ENCODE measurements at regions of chr10 and their contacts with region 1.

Region 1: GRCh38 chr10:29618341-29619171 is 16.2 kb downstream of the SVIL start:
- DNase-seq: peak; percentile 90
- ATAC-seq: peak; percentile 95
- H3K4me3 ChIP-seq: peak overlapping the region; percentile 52 to 67 (median 67)
- H3K27ac ChIP-seq: peak overlapping the region; percentile 88
- H3K4me1 ChIP-seq: peaks cover 56% of the 10 kb centered on the region
- H3K27me3 ChIP-seq: no peaks in the 10 kb centered on the region
- CTCF ChIP-seq: no peak
- EP300 ChIP-seq: peak in 1 of 2 experiments; percentile 63; a peak in 1 of 4 replicates
- POLR2A ChIP-seq: peak in 1 of 2 experiments; percentile 56; a peak in 1 of 4 replicates
- RAD21 ChIP-seq: no peak

Region 2: DNA sequence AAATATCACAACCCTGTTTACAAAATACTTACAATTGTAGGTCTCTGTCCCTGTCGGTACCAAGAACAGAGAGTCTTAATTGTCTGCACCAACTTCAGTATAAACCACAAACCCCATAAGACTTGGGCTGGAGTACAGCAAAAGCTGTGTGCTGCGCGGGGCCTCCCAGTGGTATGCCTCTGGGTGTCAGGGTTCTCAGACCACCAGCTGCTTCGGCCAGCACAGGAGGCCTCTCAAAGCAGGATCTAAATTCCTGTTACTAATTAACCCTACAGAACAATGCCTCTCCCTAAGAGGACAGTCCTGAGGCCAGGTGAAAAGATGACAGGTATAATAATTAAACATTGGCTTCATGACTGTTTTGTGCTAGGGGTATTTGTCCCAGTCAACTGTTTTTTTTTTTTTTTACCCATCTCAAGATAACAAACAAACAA is 17.2 kb after region 1 on chr10:
- CTCF ChIA-PET with region 1: no interaction called
- POLR2A ChIA-PET with region 1: interaction called, 8 read pairs
- in situ Hi-C with region 1: no loop called
- intact Hi-C with region 1: loop called (anchors 1 kb)
- DNase-seq: peak; percentile 87
- ATAC-seq: peak; percentile 100
- H3K4me3 ChIP-seq: peak overlapping the region; percentile 36 to 55 (median 37); a peak in 4 of 6 replicates
- H3K27ac ChIP-seq: peak overlapping the region; percentile 37
- H3K4me1 ChIP-seq: peaks cover 42% of the 10 kb centered on the region
- H3K27me3 ChIP-seq: no peaks in the 10 kb centered on the region
- CTCF ChIP-seq: peak; percentile 48
- EP300 ChIP-seq: peak in 1 of 2 experiments; percentile 58; a peak in 2 of 4 replicates
- POLR2A ChIP-seq: peak in 1 of 2 experiments; percentile 31; a peak in 1 of 4 replicates
- RAD21 ChIP-seq: 0 out of 2 replicates have a peak, but pooled peaks have one; percentile 15

Region 3: GRCh38 chr10:29648114-29648982 is 29.8 kb after region 1 on chr10:
- CTCF ChIA-PET with region 1: no interaction called
- POLR2A ChIA-PET with region 1: interaction called, 10 read pairs
- in situ Hi-C with region 1: no loop called
- intact Hi-C with region 1: no loop called
- DNase-seq: no peak
- ATAC-seq: no peak; the same call in 2 of the 3 replicates
- H3K4me3 ChIP-seq: no peak overlapping the region
- H3K27ac ChIP-seq: peak overlapping the region; percentile 28
- H3K4me1 ChIP-seq: peaks cover 30% of the 10 kb centered on the region
- H3K27me3 ChIP-seq: no peaks in the 10 kb centered on the region
- CTCF ChIP-seq: no peak
- EP300 ChIP-seq: no peak
- POLR2A ChIP-seq: no peak
- RAD21 ChIP-seq: no peak

Region 4: DNA sequence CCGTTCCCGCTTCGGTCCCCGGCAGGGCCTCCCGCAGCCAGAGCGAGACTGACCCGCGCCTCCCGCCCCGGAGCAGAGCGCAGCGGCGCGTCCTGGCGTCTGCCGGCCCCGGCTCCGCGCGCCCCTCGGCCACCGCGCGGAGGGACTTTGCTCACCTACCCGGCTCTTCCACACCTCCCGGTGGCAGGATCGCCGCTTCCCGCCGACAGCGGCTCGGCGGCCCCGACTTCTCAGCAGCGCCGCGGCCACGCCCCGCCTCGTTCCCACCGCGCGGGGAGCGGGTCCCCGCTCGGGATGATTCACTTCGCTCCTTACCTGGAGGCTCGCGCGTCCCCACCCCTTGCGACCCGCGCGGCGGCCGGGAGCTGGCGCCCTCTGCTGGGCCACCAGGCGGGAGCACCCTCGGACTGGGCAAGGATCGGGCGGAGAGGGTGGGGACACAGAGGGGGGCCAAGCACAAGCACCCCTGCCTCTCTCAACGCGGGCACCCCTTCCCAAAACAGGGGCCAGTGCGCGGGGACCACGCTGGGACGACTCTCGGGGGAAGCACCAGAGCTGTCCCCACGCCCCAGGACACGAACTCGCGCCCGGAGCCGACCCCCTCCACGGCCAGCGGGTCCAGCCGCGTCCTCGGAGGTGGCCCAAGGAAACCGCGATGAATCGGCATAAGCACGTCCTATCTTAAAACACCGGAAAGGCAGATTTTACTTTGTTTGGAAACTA is 117.2 kb after region 1 on chr10:
- CTCF ChIA-PET with region 1: no interaction called
- POLR2A ChIA-PET with region 1: interaction called, 4 read pairs
- in situ Hi-C with region 1: no loop called
- intact Hi-C with region 1: loop called (anchors 1 kb)
- DNase-seq: peak; percentile 61
- ATAC-seq: peak; percentile 90
- H3K4me3 ChIP-seq: peak overlapping the region; percentile 73 to 88 (median 85)
- H3K27ac ChIP-seq: peak overlapping the region; percentile 39
- H3K4me1 ChIP-seq: peaks cover 46% of the 10 kb centered on the region
- H3K27me3 ChIP-seq: peaks cover 0 to 13% of the 10 kb centered on the region in 2 experiments; a peak in 3 of 5 replicates
- CTCF ChIP-seq: peak; percentile 97
- EP300 ChIP-seq: no peak
- POLR2A ChIP-seq: peak in 1 of 2 experiments; percentile 44; a peak in 1 of 4 replicates
- RAD21 ChIP-seq: peak; percentile 81

Region 5: DNA sequence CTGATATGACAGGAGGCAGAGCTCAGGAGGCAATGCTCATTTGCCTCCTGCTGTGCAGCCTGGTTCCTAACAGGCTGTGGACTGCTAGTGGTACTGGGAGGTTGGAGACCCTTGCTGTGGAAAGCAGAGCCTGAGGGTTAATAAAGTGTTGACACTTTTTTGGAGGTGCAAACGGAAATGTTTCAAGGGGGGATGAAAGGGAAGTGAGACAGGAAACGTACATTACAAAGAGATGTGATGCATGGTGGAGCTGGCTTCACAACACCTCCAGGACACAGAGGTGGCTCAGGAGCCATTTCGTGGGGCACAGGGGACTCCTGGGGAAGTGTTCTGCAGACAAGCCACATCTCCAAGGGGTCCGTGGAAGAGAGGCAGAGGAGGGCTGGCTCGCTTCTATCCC is 153.8 kb after region 1 on chr10:
- CTCF ChIA-PET with region 1: no interaction called
- POLR2A ChIA-PET with region 1: no interaction called
- in situ Hi-C with region 1: no loop called
- intact Hi-C with region 1: no loop called
- DNase-seq: no peak
- ATAC-seq: no peak
- H3K4me3 ChIP-seq: no peak overlapping the region
- H3K27ac ChIP-seq: no peak overlapping the region
- H3K4me1 ChIP-seq: no peaks in the 10 kb centered on the region
- H3K27me3 ChIP-seq: no peaks in the 10 kb centered on the region
- CTCF ChIP-seq: no peak
- EP300 ChIP-seq: no peak
- POLR2A ChIP-seq: no peak
- RAD21 ChIP-seq: no peak

Measured in HepG2 (cell line).